ENCODE measurements at regions of chr18 and their contacts with region 1.

Region 1: DNA sequence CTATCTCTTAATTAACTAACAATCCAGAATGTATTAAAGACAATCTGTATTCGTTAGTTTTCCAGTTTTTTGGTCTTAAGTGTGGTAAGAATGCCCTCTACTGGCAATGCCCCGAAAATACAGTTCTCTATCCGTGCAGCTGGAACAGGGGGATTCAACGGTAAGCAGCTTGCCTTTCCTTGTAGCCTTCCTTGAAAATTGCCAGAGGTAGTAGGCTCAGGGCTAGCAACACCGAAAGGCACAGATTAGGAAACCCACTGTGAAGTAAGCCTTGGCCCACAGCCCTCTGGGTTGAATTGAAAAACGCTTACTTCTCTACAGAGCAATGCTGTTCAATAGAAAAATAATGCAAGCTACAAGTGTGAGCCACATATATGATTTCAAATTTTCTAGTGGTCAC is 17.1 kb upstream of the VPS4B start:
- DNase-seq: no peak
- ATAC-seq: peak; percentile 54 to 67
- H3K4me3 ChIP-seq: no peak overlapping the region
- H3K27ac ChIP-seq: no peak overlapping the region
- H3K4me1 ChIP-seq: no peaks in the 10 kb centered on the region
- H3K27me3 ChIP-seq: no peaks in the 10 kb centered on the region

Region 2: DNA sequence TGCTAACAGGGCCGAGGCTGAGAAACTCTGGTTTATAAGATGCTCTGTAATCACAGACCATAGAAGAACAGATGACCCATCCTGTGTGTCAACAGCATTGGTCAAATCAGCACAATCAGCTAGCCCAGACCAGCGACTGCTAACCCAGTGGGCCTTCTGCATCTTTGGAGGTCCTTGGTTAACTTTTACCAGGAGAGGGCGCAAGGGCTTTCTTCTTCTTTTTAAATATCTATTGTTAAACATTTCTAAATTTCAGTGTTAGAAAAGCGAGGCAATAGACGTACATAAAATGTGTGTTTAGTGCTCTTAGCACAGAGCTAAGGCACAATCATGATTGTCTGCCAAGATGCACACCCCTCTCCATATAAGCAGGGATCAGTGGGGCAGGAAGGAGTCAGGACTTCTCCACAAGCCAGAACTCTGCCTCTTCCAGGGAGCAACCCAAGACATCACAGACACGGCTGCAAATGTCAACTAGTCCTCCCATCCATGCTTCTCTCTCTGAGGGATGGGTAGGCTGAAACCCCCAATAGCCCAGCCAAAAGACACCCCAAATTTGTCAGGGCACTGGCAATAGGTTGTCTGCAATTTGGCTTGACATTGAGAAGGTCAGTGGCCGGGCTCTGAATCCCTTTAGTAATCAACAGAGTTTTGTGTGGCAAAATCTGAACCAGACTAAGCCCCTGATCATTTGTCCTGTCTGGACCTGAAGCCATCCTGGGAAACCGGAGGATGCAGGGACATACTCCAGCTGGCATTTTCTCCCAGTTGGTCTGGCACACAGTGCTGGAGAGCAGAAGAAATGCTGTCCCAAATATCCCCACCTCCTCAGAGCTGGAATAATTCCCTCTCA is 308.0 kb before region 1 on chr18:
- intact Hi-C with region 1: loop called in 3 of 4 experiments (anchors 5 to 10 kb)
- DNase-seq: peak in 1 of 3 donors; percentile 38
- ATAC-seq: peak; percentile 42 to 69
- H3K4me3 ChIP-seq: no peak overlapping the region
- H3K27ac ChIP-seq: no peak overlapping the region
- H3K4me1 ChIP-seq: no peaks in the 10 kb centered on the region
- H3K27me3 ChIP-seq: no peaks in the 10 kb centered on the region

Region 3: DNA sequence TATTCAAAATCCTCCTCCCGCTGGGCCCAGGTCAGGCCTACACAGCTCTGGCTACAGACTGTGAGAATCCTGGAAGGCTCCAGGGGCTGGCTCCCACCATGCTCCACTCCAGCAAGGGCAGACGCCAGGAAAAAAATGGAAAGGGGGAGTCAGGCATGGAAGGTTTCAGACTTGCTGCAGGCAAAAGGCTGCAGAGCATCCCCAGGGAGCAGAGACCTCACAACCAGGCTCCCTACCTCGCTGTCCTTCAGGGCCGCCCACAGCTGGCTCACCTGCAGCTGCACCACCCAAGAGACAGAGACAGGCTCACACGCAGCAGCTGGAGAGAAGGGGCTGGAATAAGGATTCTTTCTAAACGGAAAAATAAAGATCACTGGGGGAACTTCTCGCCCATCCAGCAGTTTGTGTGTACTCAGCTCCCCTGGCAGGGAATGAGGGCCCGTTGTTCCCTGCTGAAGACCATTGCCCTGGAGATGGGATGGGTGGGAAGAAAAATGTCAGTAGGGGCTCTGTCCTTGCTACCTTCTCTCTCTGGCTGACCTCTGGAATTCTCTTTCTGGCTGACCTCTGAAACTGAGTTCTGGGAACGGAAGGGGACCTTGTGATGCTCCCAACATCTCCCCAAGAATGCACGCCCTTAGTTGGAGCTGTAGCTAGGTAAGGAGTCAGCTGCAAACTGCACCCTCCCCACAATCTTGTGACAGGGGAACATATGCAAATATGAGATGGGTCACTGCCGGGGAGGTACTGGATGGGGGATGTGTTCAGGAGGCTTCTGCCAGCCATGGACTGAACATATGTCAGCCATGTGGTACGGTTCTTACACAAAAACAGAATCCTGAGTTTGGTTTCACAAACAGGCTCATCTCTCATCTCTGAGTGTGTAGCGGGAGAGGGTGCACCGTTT is 154.3 kb before region 1 on chr18:
- intact Hi-C with region 1: no loop called
- DNase-seq: peak in 1 of 3 donors; percentile 40
- ATAC-seq: peak in 1 of 2 donors; percentile 24
- H3K4me3 ChIP-seq: no peak overlapping the region
- H3K27ac ChIP-seq: no peak overlapping the region
- H3K4me1 ChIP-seq: peaks cover 7% of the 10 kb centered on the region
- H3K27me3 ChIP-seq: no peaks in the 10 kb centered on the region

Region 4: DNA sequence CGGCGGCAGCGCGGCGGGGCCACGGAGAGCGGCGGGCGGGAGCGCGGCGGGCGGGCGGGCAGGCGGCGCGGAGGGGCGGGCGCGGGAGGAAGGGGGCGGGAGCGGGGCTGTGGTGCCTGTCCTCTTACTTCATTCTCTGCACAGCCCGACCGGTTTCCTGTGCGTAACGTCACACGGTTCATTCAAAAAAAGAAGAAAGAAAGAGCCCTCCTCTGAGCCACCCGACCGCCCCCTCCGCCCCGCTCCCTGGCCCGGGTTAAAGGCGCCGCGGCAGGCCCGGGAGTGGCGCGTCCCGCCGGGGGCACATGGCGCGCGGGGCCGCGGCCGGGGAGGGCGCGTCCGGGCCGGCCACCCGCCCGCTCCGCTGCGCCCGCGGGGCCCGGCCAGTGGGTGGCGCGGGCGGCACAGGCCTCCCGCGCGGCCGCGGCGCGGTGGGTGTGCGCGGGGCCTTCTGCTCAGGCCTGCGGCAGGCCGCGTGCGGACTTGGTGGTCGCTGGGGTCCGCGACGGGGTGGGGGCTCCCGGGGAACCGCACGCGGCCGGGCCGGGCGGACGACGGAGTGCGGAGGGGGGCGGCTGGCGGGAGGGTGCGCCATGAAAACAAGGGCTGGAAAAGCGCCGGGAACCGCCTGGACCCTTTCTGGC is 119.2 kb before region 1 on chr18:
- intact Hi-C with region 1: loop called in 1 of 4 experiments (anchors 5 kb)
- DNase-seq: peak; percentile 82 to 92 (median 91)
- ATAC-seq: peak; percentile 83 to 86
- H3K4me3 ChIP-seq: peak overlapping the region; percentile 100
- H3K27ac ChIP-seq: peak overlapping the region; percentile 80
- H3K4me1 ChIP-seq: peaks cover 8% of the 10 kb centered on the region
- H3K27me3 ChIP-seq: no peaks in the 10 kb centered on the region

Region 5: GRCh38 chr18:63339920-63340484 is 99.3 kb before region 1 on chr18:
- intact Hi-C with region 1: loop called in 3 of 4 experiments (anchors 5 to 10 kb)
- DNase-seq: no peak
- ATAC-seq: no peak
- H3K4me3 ChIP-seq: no peak overlapping the region
- H3K27ac ChIP-seq: no peak overlapping the region
- H3K4me1 ChIP-seq: peaks cover 1% of the 10 kb centered on the region
- H3K27me3 ChIP-seq: no peaks in the 10 kb centered on the region

Region 6: DNA sequence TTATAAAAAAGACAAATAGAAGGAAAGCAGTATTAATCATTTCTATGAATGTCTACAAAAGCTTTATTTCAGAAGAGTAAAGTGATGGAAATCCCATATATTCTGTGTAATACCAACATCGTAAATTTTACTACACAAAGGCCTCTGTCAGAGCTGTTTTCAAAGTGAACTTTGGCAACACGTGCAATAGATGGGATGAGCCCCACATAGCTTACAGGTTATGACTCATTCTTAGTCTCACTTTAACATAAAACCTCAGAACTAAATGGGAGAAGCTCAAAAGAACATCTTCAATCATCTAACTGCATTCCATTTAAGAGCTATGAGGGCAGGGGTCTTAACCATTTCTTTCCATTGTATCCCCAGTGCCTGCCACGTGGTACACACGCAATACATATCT is 28.5 kb before region 1 on chr18:
- intact Hi-C with region 1: no loop called
- DNase-seq: no peak
- ATAC-seq: no peak
- H3K4me3 ChIP-seq: no peak overlapping the region
- H3K27ac ChIP-seq: no peak overlapping the region
- H3K4me1 ChIP-seq: no peaks in the 10 kb centered on the region
- H3K27me3 ChIP-seq: no peaks in the 10 kb centered on the region

Measured in right cardiac atrium (tissue), 5 donors.